Colonic mucosa (tissue), 4 donors: ENCODE measurements at regions of chr3 and their contacts with region 1.

Region 1: DNA sequence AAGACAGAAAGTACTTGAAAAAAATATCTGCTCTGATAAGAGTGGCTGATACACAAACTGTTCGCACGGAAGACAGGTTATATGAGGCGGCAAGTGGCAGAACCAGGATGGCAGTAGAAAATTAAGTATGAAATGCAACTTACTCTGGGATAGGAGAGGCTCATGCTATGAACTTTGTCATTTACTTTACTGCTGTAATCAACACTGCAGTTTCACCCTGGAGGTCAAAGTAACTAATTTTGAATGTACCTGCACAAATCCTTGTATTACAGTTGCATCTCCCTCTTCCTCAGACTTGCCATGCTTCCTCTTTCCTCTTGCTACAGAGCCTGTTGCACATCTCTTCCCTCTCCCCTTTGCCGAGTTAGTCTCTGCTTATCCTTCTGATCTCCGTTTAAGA is 38.8 kb downstream of the HACL1 start:
- DNase-seq: no peak
- H3K4me3 ChIP-seq: no peak overlapping the region
- H3K27ac ChIP-seq: no peak overlapping the region
- H3K4me1 ChIP-seq: peaks cover under 1% of the 10 kb centered on the region
- H3K27me3 ChIP-seq: no peaks in the 10 kb centered on the region
- CTCF ChIP-seq: no peak

Region 2: DNA sequence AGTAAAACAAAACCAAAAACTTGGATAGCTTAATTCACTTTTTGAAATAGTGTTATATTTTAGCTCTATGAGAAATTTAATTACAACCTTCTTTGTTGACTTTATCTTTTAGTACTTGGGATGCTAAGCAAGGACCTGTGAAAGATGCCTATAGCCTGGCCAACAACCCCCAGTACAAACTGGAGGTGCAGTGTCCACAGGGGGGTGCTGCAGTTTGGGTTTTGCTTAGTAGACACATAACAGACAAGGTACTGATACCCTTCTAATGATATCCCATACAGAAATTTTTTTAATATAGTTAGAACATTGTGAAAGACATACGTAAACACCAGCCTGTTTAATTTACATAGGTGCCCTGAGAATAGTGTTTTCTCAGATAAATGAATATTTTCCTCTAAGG is 321.2 kb before region 1 on chr3:
- intact Hi-C with region 1: loop called (anchors 10 kb)
- DNase-seq: no peak
- H3K4me3 ChIP-seq: no peak overlapping the region
- H3K27ac ChIP-seq: no peak overlapping the region
- H3K4me1 ChIP-seq: no peaks in the 10 kb centered on the region
- H3K27me3 ChIP-seq: no peaks in the 10 kb centered on the region
- CTCF ChIP-seq: no peak